ENCODE measurements at regions of chr4 and their contacts with region 1.

Region 1: GRCh38 chr4:128574706-128575105 is 234.8 kb upstream of the JADE1 start:
- DNase-seq: peak; percentile 25
- ATAC-seq: peak; percentile 99
- H3K4me3 ChIP-seq: no peak overlapping the region
- H3K27ac ChIP-seq: no peak overlapping the region
- H3K4me1 ChIP-seq: no peaks in the 10 kb centered on the region
- H3K27me3 ChIP-seq: no peaks in the 10 kb centered on the region
- CTCF ChIP-seq: peak; percentile 66 to 69 (median 68)
- EP300 ChIP-seq: no peak
- POLR2A ChIP-seq: no peak
- RAD21 ChIP-seq: peak; percentile 79

Region 2: GRCh38 chr4:128517739-128518510 is 56.8 kb before region 1 on chr4:
- CTCF ChIA-PET with region 1: interaction called, 11 read pairs
- POLR2A ChIA-PET with region 1: no interaction called
- RAD21 ChIA-PET with region 1: no interaction called
- SMC1A ChIA-PET with region 1: interaction called, 7 read pairs
- in situ Hi-C with region 1: no loop called
- intact Hi-C with region 1: no loop called
- DNase-seq: peak; percentile 94
- ATAC-seq: peak; percentile 98
- H3K4me3 ChIP-seq: no peak overlapping the region
- H3K27ac ChIP-seq: peak overlapping the region; percentile 66
- H3K4me1 ChIP-seq: peaks cover 23% of the 10 kb centered on the region
- H3K27me3 ChIP-seq: no peaks in the 10 kb centered on the region
- CTCF ChIP-seq: no peak
- EP300 ChIP-seq: peak; percentile 72 to 93; a peak in 3 of 4 replicates
- POLR2A ChIP-seq: no peak
- RAD21 ChIP-seq: no peak

Region 3: GRCh38 chr4:128558896-128559679 is 15.6 kb before region 1 on chr4:
- CTCF ChIA-PET with region 1: interaction called, 18 read pairs
- POLR2A ChIA-PET with region 1: no interaction called
- RAD21 ChIA-PET with region 1: interaction called, 4 read pairs
- SMC1A ChIA-PET with region 1: interaction called, 18 read pairs
- in situ Hi-C with region 1: no loop called
- intact Hi-C with region 1: no loop called
- DNase-seq: no peak
- ATAC-seq: no peak; the same call in 2 of the 3 replicates
- H3K4me3 ChIP-seq: no peak overlapping the region
- H3K27ac ChIP-seq: no peak overlapping the region
- H3K4me1 ChIP-seq: no peaks in the 10 kb centered on the region
- H3K27me3 ChIP-seq: no peaks in the 10 kb centered on the region
- CTCF ChIP-seq: no peak
- EP300 ChIP-seq: no peak
- POLR2A ChIP-seq: no peak
- RAD21 ChIP-seq: no peak

Region 4: DNA sequence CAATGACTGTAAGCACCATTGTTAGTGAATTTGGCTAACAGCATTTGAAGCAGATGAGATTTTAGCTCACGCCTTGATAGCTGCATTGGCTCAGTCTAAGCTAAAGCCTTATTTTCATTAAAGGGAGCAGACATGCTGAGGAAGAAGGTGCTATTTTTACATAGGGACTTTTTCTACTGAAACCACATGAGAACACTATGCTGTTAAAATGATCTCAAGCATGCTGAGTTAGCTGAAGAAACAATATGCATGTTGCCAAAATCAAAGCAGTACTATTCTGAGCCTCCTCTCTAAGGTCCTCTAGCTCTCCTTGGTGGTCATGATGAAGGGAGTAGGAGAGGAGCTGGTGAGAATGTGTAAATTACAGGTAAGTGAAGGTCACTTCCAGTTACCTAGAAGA is 100.4 kb after region 1 on chr4:
- CTCF ChIA-PET with region 1: interaction called, 73 read pairs
- POLR2A ChIA-PET with region 1: interaction called, 3 read pairs
- RAD21 ChIA-PET with region 1: interaction called, 40 read pairs
- SMC1A ChIA-PET with region 1: interaction called, 68 read pairs
- in situ Hi-C with region 1: no loop called
- intact Hi-C with region 1: loop called (anchors 5 kb)
- DNase-seq: peak; percentile 90
- ATAC-seq: peak; percentile 97
- H3K4me3 ChIP-seq: no peak overlapping the region; the same call in 1 of the 2 replicates
- H3K27ac ChIP-seq: peak overlapping the region; percentile 69
- H3K4me1 ChIP-seq: peaks cover 9% of the 10 kb centered on the region
- H3K27me3 ChIP-seq: no peaks in the 10 kb centered on the region
- CTCF ChIP-seq: peak in 1 of 3 experiments; percentile 60; a peak in 3 of 6 replicates
- EP300 ChIP-seq: peak in 1 of 2 experiments; percentile 74; a peak in 2 of 4 replicates
- POLR2A ChIP-seq: no peak
- RAD21 ChIP-seq: peak; percentile 90

Region 5: GRCh38 chr4:128831531-128832242 is 257.0 kb after region 1 on chr4:
- CTCF ChIA-PET with region 1: interaction called, 11 read pairs
- POLR2A ChIA-PET with region 1: no interaction called
- RAD21 ChIA-PET with region 1: no interaction called
- SMC1A ChIA-PET with region 1: interaction called, 7 read pairs
- in situ Hi-C with region 1: no loop called
- intact Hi-C with region 1: no loop called
- DNase-seq: no peak
- ATAC-seq: peak; percentile 82
- H3K4me3 ChIP-seq: no peak overlapping the region
- H3K27ac ChIP-seq: peak overlapping the region; percentile 70
- H3K4me1 ChIP-seq: peaks cover 36% of the 10 kb centered on the region
- H3K27me3 ChIP-seq: no peaks in the 10 kb centered on the region
- CTCF ChIP-seq: no peak
- EP300 ChIP-seq: 0 out of 4 replicates have a peak, but pooled peaks of 1 of the 2 experiments have one; percentile 20
- POLR2A ChIP-seq: no peak
- RAD21 ChIP-seq: no peak